Heart left ventricle (tissue), 16 donors: ENCODE measurements at regions of chr7 and their contacts with region 1.

Region 1: GRCh38 chr7:41977151-41977651 is 259.8 kb downstream of the GLI3 start:
- DNase-seq: peak in 3 of 5 donors; percentile 26 to 45 (median 40)
- ATAC-seq: peak; percentile 34 to 71 (median 67)
- H3K4me3 ChIP-seq: no peak overlapping the region
- H3K27ac ChIP-seq: no peak overlapping the region
- H3K4me1 ChIP-seq: peaks cover 0 to 30% (median 7%) of the 10 kb centered on the region in 12 donors
- H3K27me3 ChIP-seq: no peaks in the 10 kb centered on the region
- CTCF ChIP-seq: peak; percentile 52 to 78 (median 68)
- POLR2A ChIP-seq: no peak

Region 2: DNA sequence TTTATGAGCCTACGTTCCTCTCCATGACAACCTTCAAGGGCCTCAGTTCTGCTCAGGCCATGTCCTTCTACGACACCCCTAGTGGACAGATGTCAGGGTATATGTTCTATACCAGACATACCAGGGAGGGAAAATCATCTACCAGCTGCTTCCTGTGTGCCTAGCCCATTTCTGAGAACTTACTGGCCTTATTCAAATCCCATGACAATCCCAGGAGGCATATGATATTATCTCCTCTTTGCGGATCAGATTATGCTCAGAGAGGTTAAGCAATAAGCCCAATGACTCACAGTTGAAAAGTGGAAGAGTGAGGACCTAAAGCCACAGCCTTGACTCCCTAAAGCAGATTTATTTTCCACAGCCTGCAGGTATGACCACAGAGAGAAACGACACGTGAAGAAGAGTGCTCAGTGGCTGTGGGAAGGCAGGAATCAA is 120.6 kb after region 1 on chr7:
- intact Hi-C with region 1: loop called in 1 of 10 experiments (anchors 10 kb)
- DNase-seq: no peak
- ATAC-seq: peak in 2 of 4 donors; percentile 5 to 14
- H3K4me3 ChIP-seq: no peak overlapping the region
- H3K27ac ChIP-seq: peak overlapping the region in 1 of 12 donors; percentile 76
- H3K4me1 ChIP-seq: peaks cover 0 to 26% (median 19%) of the 10 kb centered on the region in 12 donors
- H3K27me3 ChIP-seq: no peaks in the 10 kb centered on the region
- CTCF ChIP-seq: peak in 1 of 12 donors; percentile 5
- POLR2A ChIP-seq: no peak

Region 3: DNA sequence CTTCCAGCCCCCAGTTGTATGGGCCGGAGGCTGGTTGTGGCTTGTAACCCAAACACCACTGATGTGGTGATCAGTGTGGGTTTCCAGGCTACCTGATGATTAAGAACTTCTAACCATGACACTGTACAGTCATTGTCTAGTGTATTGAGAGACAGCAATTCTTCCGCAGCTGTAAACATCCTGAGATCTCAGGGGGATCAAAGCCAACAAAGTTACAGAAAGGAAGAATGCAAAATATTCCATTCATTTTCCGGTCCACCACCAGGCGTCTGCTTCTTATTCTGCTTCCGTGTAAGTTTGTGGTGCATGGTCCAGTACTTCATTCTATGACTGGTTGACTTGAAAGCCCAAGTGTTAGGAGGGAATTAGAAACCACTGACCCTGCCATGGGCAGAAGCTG is 270.1 kb after region 1 on chr7:
- intact Hi-C with region 1: loop called in 1 of 10 experiments (anchors 5 kb)
- DNase-seq: no peak
- ATAC-seq: no peak
- H3K4me3 ChIP-seq: no peak overlapping the region
- H3K27ac ChIP-seq: no peak overlapping the region
- H3K4me1 ChIP-seq: peaks cover 0 to 9% (median 0%) of the 10 kb centered on the region in 12 donors
- H3K27me3 ChIP-seq: no peaks in the 10 kb centered on the region
- CTCF ChIP-seq: peak in 1 of 12 donors; percentile 9
- POLR2A ChIP-seq: no peak

Region 4: DNA sequence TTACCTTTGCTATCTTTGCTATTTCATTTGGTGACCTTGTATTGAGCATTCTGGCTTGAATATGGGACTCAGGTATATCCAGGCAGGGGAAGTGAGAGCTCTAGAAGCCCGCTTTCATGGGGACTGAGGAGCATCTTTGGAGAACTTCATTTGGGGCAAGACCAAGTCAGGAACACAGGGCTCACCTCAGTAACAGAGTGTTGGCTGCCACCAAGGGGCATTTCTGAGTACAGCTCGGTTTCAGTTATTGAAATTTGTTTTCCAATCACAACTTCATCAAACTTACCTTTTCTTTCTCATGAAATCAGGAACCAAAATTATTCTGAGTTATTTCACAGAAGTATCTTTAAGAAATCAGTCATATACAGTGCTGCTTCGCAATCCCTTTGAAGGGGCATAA is 597.5 kb after region 1 on chr7:
- intact Hi-C with region 1: loop called in 2 of 10 experiments (anchors 10 kb)
- DNase-seq: no peak
- ATAC-seq: no peak
- H3K4me3 ChIP-seq: no peak overlapping the region
- H3K27ac ChIP-seq: peak overlapping the region in 1 of 12 donors; percentile 48
- H3K4me1 ChIP-seq: no peaks in the 10 kb centered on the region
- H3K27me3 ChIP-seq: no peaks in the 10 kb centered on the region
- CTCF ChIP-seq: peak in 4 of 12 donors; percentile 7 to 23 (median 19)
- POLR2A ChIP-seq: no peak

Region 5: DNA sequence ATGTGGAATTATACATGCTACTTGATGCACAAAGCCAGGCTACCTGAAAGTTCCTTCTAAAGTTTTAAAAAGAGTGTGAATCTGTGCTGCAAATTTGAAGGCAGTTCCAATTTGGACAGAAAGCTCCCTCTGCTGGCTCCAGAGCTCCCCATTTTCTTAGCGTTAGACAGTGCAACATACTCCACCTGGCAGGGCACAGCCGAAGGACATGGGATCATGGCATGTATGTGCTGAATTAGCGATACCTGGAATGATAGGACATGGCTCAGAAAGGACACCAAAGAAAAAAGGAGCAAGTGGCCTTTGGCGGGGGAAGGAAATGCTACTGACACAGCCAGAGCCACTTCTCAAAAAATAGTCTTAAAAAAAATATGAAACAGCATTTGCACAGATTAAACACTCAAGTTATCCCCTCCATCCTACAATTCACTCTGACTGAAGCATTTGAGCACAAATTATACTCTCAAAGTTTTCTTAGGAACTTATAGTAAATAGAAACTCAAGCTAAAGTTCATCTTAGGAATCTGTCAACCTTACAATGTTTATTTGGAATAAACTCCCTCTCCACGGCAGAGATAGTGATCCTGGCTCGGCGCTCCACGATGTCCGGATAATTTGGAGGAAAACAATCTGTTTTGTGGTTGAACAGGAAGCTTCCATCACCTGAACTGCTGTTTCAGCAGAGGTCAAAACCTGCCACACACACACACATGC is 854.7 kb after region 1 on chr7:
- intact Hi-C with region 1: loop called in 5 of 10 experiments (anchors 5 to 10 kb)
- DNase-seq: peak in 4 of 5 donors; percentile 21 to 42 (median 34)
- ATAC-seq: peak; percentile 42 to 75 (median 72)
- H3K4me3 ChIP-seq: no peak overlapping the region
- H3K27ac ChIP-seq: peak overlapping the region in 1 of 12 donors; percentile 18
- H3K4me1 ChIP-seq: peaks cover 0 to 9% (median 1%) of the 10 kb centered on the region in 12 donors
- H3K27me3 ChIP-seq: peaks cover 0 to 7% (median 0%) of the 10 kb centered on the region in 9 donors
- CTCF ChIP-seq: peak; percentile 29 to 81 (median 64)
- POLR2A ChIP-seq: no peak